Activated CD4-positive, alpha-beta memory T cell treated with anti-CD3 and anti-CD28 coated beads for 36 hours (primary cell): ENCODE measurements at regions of chr2 and their contacts with region 1.

Region 1: GRCh38 chr2:102442967-102443828 is 20.2 kb downstream of the IL18RAP start:
- DNase-seq: peak; percentile 63
- H3K4me3 Mint-ChIP-seq: peak overlapping the region; percentile 16
- H3K27ac Mint-ChIP-seq: peak overlapping the region; percentile 34
- H3K4me1 Mint-ChIP-seq: peaks cover 10% of the 10 kb centered on the region
- H3K27me3 Mint-ChIP-seq: no peaks in the 10 kb centered on the region

Region 2: DNA sequence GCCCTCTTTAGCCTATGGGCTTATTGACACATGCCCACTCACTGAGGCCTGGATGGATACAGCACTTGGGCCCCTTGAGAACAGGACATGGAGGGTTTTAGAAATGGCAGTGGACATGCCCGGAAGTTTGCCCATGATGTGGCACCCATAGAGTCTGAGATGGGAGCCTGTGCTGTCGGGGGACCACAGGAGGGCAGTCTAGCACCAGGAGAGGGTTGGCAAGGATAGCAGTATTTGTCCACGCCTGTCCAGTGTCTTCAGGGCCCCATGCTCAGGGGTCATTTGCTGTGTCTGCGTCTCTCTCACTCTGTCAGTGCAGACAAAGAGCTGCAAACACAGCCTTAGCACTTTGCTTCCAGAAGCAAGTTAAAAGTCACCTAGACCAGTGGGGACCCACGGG is 207.7 kb before region 1 on chr2:
- CTCF ChIA-PET with region 1: interaction called, 56 read pairs
- POLR2A ChIA-PET with region 1: no interaction called
- intact Hi-C with region 1: no loop called
- DNase-seq: peak; percentile 56
- H3K4me3 Mint-ChIP-seq: no peak overlapping the region
- H3K27ac Mint-ChIP-seq: peak overlapping the region; percentile 61
- H3K4me1 Mint-ChIP-seq: peaks cover 58% of the 10 kb centered on the region
- H3K27me3 Mint-ChIP-seq: peaks cover 2% of the 10 kb centered on the region

Region 3: DNA sequence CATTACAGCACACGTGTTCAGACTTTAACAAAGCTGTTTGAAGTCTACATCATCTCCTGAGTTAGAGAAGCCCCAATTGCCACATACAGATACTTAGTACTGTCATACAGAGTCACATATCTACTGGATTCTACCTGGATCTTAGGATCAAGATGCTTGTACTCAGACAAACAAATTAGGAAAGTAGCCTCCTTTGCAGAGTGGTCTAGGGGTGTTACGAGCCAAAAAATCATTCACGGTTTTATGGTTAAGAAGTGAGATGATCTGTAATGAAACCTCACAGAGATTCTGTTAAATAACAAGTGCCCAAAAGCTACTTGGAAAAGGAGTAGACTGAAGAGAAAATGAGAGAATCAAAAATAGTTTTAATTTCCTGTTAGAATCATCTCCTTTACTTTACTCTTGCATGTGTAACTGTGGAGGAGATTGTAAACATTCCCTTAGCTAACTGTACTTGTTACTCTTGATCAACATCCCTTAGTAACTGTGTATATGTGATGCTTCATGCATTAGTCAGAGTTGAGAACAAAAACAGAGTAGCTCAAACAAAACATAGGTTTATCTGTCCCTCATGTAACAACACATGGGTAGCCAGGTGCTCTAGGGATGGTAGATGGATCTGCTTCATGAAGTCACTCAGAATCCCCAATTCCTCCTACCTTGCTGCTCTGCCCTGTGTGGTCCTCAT is 148.3 kb before region 1 on chr2:
- CTCF ChIA-PET with region 1: interaction called, 24 read pairs
- POLR2A ChIA-PET with region 1: no interaction called
- intact Hi-C with region 1: loop called (anchors 5 kb)
- DNase-seq: no peak
- H3K4me3 Mint-ChIP-seq: no peak overlapping the region
- H3K27ac Mint-ChIP-seq: no peak overlapping the region
- H3K4me1 Mint-ChIP-seq: peaks cover 33% of the 10 kb centered on the region
- H3K27me3 Mint-ChIP-seq: peaks cover 5% of the 10 kb centered on the region

Region 4: GRCh38 chr2:102350137-102350793 is 92.9 kb before region 1 on chr2:
- CTCF ChIA-PET with region 1: interaction called, 74 read pairs
- POLR2A ChIA-PET with region 1: no interaction called
- intact Hi-C with region 1: no loop called
- DNase-seq: no peak
- H3K4me3 Mint-ChIP-seq: no peak overlapping the region
- H3K27ac Mint-ChIP-seq: no peak overlapping the region
- H3K4me1 Mint-ChIP-seq: peaks cover 3% of the 10 kb centered on the region
- H3K27me3 Mint-ChIP-seq: peaks cover 2% of the 10 kb centered on the region

Region 5: DNA sequence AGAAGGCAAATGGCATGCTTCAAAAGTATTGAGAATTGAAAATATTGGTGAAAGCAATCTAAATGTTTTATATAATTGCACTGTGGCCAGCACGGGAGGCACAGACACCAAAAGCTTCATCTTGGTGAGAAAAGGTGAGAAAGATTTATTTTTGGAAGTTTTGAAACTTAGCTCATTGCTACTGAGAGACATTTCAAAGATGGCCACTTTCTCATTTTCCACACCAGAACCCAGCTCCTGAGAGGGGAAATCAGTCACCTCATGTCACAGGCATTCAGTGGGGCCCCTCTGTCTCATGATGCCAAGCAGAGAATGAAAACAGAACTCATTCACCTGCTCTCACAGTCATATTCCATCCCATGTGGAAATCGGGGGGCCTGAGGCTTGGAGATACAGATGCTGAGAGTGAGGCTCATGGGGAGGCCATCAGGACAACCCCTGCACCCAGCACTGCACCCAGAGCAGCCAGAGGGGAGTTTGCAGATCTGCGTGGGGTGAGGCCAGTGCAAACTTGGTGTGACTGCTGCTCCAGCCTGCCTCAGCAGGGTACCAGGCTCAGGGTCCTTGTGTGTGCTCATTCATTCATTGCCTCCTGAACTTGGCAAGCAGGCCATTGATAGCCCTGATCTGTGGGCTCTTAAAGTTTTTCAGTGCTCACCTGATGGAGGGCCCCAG is 56.2 kb before region 1 on chr2:
- CTCF ChIA-PET with region 1: no interaction called
- POLR2A ChIA-PET with region 1: no interaction called
- intact Hi-C with region 1: no loop called
- DNase-seq: no peak
- H3K4me3 Mint-ChIP-seq: no peak overlapping the region
- H3K27ac Mint-ChIP-seq: no peak overlapping the region
- H3K4me1 Mint-ChIP-seq: peaks cover 18% of the 10 kb centered on the region
- H3K27me3 Mint-ChIP-seq: no peaks in the 10 kb centered on the region

Region 6: GRCh38 chr2:102424754-102425153 is 18.4 kb before region 1 on chr2:
- CTCF ChIA-PET with region 1: interaction called, 13 read pairs
- POLR2A ChIA-PET with region 1: no interaction called
- intact Hi-C with region 1: no loop called
- DNase-seq: no peak
- H3K4me3 Mint-ChIP-seq: no peak overlapping the region
- H3K27ac Mint-ChIP-seq: no peak overlapping the region
- H3K4me1 Mint-ChIP-seq: peaks cover 67% of the 10 kb centered on the region
- H3K27me3 Mint-ChIP-seq: peaks cover 6% of the 10 kb centered on the region

Region 7: DNA sequence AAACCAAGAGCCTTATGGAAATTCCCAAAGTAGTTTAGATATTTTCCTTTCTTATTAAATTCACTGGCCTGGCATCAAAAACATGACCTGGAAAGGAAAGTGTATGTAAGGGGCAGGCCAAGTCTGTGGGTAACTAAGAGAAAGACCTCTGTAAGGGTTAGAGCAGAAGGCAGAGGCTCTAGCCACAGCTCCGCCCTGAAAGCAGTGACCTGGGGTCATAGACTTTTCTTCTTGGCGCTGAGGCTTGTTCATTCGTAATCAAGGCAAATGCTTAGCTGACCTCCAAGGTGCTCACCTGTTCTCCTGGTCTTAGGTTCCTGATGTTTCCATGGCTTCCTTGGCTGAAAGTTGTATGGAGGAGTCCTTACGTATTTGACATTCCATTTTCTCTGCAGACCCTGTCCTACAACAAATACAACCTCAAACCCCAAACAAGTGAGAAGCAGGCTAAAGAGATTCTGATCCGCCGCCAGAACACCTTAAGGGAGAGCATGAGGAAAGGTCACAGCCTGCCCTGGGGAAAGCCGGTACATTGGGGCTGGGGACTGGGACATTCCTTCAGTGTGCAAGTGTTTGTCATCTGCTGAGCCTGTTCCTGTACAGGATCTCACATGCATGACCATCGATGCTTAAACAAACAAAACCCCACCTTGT is 81.6 kb after region 1 on chr2:
- CTCF ChIA-PET with region 1: no interaction called
- POLR2A ChIA-PET with region 1: no interaction called
- intact Hi-C with region 1: no loop called
- DNase-seq: no peak
- H3K4me3 Mint-ChIP-seq: no peak overlapping the region
- H3K27ac Mint-ChIP-seq: no peak overlapping the region
- H3K4me1 Mint-ChIP-seq: no peaks in the 10 kb centered on the region
- H3K27me3 Mint-ChIP-seq: peaks cover 2% of the 10 kb centered on the region